ENCODE measurements at regions of chr11 and their contacts with region 1.

Region 1: GRCh38 chr11:106399076-106399511 is 321.6 kb downstream of the AASDHPPT start:
- DNase-seq: peak; percentile 99
- ATAC-seq: peak; percentile 95
- H3K4me3 ChIP-seq: peak overlapping the region; percentile 41; the same call in 1 of the 2 replicates
- H3K27ac ChIP-seq: peak overlapping the region; percentile 93
- H3K4me1 ChIP-seq: peaks cover 41% of the 10 kb centered on the region
- H3K27me3 ChIP-seq: no peaks in the 10 kb centered on the region
- CTCF ChIP-seq: no peak

Region 2: DNA sequence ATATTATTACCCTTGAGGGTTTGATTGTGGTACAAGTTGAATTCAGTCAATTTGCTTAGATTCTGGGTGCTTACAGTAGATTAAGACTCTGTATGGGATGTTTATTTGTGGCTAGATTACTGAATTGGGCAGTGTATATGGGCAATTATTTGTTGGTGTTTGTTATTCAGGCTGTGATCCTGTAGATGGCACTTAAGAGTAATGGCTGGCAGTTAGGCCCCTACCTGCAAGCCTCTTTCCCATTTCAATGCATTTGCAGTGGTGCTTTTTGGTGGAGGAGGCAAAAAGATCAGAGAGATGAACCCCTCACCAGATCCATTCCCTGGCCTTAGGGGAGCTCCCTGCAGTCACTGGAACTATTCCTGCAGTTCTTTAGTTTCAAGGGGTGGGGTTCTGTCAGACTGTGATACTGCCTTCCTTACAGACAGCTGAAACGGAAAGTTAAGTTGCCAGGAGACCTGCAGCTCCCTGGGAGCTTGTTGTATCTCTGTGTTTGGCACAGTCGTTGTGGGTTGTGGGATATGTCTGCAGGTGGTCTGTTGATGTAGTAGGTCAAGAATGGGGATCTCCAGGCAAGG is 122.1 kb before region 1 on chr11:
- CTCF ChIA-PET with region 1: no interaction called
- POLR2A ChIA-PET with region 1: no interaction called
- intact Hi-C with region 1: loop called (anchors 1 kb)
- DNase-seq: peak; percentile 62
- ATAC-seq: peak; percentile 61
- H3K4me3 ChIP-seq: no peak overlapping the region
- H3K27ac ChIP-seq: no peak overlapping the region
- H3K4me1 ChIP-seq: peaks cover 28% of the 10 kb centered on the region
- H3K27me3 ChIP-seq: no peaks in the 10 kb centered on the region
- CTCF ChIP-seq: peak; percentile 87

Region 3: DNA sequence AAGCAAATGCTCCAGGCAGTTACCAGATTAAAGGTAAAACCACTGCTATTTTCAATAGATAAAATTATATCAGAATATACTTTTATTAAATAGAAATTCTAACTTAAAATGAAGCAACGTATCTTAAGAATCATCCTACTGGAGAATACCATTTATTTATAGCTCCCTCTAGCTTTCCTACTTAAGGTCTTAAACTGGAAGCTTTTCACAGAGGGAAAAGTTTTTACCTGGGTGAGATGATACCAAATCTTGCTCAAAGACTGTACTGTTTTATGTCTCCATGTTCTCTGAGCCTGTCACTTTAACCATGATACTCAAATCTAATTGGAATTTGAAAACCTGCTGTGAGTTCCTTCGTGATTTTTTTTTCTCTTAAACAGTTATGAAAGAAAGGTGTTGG is 29.9 kb before region 1 on chr11:
- CTCF ChIA-PET with region 1: no interaction called
- POLR2A ChIA-PET with region 1: no interaction called
- intact Hi-C with region 1: loop called (anchors 2 kb)
- DNase-seq: no peak
- ATAC-seq: 0 out of 2 replicates have a peak, but pooled peaks have one; percentile 14
- H3K4me3 ChIP-seq: no peak overlapping the region
- H3K27ac ChIP-seq: no peak overlapping the region
- H3K4me1 ChIP-seq: peaks cover 20% of the 10 kb centered on the region
- H3K27me3 ChIP-seq: no peaks in the 10 kb centered on the region
- CTCF ChIP-seq: peak; percentile 21; the same call in 1 of the 2 replicates

Region 4: DNA sequence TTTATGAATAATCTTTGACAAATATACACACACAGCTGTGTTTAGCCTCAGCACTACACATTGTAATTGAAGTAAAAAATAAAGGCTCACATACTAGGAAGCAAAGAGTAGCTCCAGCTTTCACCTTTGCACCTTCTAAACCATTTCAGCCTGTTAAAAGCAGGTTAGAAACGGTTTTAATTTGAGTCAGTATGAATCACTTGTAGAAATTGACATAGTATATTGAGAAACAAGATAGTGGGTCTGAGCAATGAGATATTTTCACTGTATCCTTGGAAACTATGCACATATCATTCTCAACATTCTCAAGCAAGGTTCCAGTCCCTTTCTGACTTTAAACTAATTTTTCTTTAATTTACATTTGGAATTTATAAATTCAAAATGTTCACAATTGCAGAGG is 58.6 kb after region 1 on chr11:
- CTCF ChIA-PET with region 1: interaction called, 7 read pairs
- POLR2A ChIA-PET with region 1: no interaction called
- intact Hi-C with region 1: loop called (anchors 2 kb)
- DNase-seq: peak; percentile 96
- ATAC-seq: peak; percentile 90
- H3K4me3 ChIP-seq: 0 out of 2 replicates have a peak overlapping the region, but pooled peaks have one; percentile 9
- H3K27ac ChIP-seq: peak overlapping the region; percentile 90
- H3K4me1 ChIP-seq: peaks cover 42% of the 10 kb centered on the region
- H3K27me3 ChIP-seq: no peaks in the 10 kb centered on the region
- CTCF ChIP-seq: no peak

Region 5: GRCh38 chr11:106524436-106524835 is 125.3 kb after region 1 on chr11:
- CTCF ChIA-PET with region 1: no interaction called
- POLR2A ChIA-PET with region 1: no interaction called
- intact Hi-C with region 1: no loop called
- DNase-seq: no peak
- ATAC-seq: no peak
- H3K4me3 ChIP-seq: no peak overlapping the region
- H3K27ac ChIP-seq: no peak overlapping the region
- H3K4me1 ChIP-seq: peaks cover 7% of the 10 kb centered on the region; the same call in 1 of the 2 replicates
- H3K27me3 ChIP-seq: no peaks in the 10 kb centered on the region
- CTCF ChIP-seq: no peak

Region 6: GRCh38 chr11:106585061-106585460 is 186.0 kb after region 1 on chr11:
- CTCF ChIA-PET with region 1: interaction called, 3 read pairs
- POLR2A ChIA-PET with region 1: no interaction called
- intact Hi-C with region 1: loop called (anchors 2 kb)
- DNase-seq: peak; percentile 77
- ATAC-seq: peak; percentile 95
- H3K4me3 ChIP-seq: no peak overlapping the region
- H3K27ac ChIP-seq: no peak overlapping the region
- H3K4me1 ChIP-seq: no peaks in the 10 kb centered on the region
- H3K27me3 ChIP-seq: no peaks in the 10 kb centered on the region
- CTCF ChIP-seq: peak; percentile 88

Measured in PC-3 (cell line).